GM10248 (cell line): ENCODE measurements at regions of chr7 and their contacts with region 1.

Region 1: DNA sequence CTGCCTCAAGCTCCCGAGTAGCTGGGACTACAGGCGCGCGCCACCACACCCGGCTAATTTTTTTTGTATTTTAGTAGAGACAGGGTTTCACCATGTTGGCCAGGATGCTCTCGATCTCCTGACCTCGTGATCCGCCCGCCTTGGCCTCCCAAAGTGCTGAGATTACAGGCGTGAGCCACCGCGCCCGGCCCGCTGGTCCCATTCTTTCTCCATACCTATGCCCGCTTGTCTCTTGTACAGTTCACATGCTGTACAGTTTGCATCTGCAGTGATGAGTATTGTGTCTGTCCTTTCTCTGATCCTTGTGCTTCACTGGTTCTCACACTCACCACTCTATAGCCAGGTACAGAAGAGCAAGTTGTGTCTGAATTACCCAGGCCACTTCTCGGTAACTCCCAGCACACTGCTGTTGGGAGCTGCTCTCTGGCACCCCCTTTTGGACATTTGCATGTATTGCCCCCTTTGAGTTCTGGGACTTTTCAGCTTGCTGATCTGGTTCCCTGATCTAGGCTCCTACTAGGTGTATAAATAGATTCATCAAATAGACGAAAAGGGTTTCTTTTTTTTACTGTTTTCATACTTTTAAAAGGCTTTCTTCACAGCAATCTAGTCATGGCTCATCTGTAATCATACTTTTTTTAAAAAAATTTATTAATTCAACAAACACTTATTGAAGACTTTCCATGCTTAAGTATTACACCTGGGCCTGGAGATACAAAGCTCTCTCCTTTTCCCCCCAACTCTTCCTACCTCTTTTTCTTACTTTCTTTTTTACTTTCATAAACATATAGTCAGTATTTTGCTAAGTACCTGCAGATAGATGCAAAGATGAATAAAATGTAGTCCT is 53.5 kb downstream of the AOAH start:
- DNase-seq: peak; percentile 69
- CTCF ChIP-seq: peak; percentile 86

Region 2: GRCh38 chr7:36440880-36441279 is 229.9 kb before region 1 on chr7:
- CTCF ChIA-PET with region 1: interaction called, 13 read pairs
- POLR2A ChIA-PET with region 1: no interaction called
- DNase-seq: no peak
- CTCF ChIP-seq: no peak

Region 3: GRCh38 chr7:36563706-36564327 is 107.0 kb before region 1 on chr7:
- CTCF ChIA-PET with region 1: no interaction called
- POLR2A ChIA-PET with region 1: no interaction called
- DNase-seq: no peak
- CTCF ChIP-seq: no peak

Region 4: GRCh38 chr7:36659172-36659516 is 11.7 kb before region 1 on chr7:
- CTCF ChIA-PET with region 1: interaction called, 16 read pairs
- POLR2A ChIA-PET with region 1: no interaction called
- DNase-seq: no peak
- CTCF ChIP-seq: no peak

Region 5: GRCh38 chr7:36682102-36682501 is 11.3 kb after region 1 on chr7:
- CTCF ChIA-PET with region 1: interaction called, 32 read pairs
- POLR2A ChIA-PET with region 1: no interaction called
- DNase-seq: no peak
- CTCF ChIP-seq: no peak

Region 6: GRCh38 chr7:36871863-36872262 is 201.1 kb after region 1 on chr7:
- CTCF ChIA-PET with region 1: no interaction called
- POLR2A ChIA-PET with region 1: no interaction called
- DNase-seq: peak; percentile 11
- CTCF ChIP-seq: no peak

Region 7: DNA sequence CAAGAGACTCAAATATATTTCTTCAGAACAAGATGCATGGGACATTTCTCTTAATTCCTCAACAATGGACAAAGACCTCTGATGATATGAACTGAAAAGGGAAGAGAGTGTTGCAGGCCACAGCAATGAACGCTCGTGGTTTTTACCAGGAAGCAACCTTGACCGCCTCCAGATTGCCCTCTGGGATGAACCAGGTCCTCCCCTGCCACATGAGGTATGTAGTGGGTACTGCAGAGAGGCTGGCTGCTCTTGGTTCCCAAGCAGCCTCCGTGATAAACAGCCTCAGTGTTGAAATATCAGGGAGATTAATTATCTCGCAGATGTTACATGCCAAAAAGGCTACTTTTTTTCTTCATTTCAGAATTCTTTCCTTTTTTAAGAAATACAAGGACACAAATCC is 439.0 kb after region 1 on chr7:
- CTCF ChIA-PET with region 1: no interaction called
- POLR2A ChIA-PET with region 1: no interaction called
- DNase-seq: no peak
- CTCF ChIP-seq: no peak